BJ (cell line): ENCODE measurements at regions of chr21 and their contacts with region 1.

Region 1: DNA sequence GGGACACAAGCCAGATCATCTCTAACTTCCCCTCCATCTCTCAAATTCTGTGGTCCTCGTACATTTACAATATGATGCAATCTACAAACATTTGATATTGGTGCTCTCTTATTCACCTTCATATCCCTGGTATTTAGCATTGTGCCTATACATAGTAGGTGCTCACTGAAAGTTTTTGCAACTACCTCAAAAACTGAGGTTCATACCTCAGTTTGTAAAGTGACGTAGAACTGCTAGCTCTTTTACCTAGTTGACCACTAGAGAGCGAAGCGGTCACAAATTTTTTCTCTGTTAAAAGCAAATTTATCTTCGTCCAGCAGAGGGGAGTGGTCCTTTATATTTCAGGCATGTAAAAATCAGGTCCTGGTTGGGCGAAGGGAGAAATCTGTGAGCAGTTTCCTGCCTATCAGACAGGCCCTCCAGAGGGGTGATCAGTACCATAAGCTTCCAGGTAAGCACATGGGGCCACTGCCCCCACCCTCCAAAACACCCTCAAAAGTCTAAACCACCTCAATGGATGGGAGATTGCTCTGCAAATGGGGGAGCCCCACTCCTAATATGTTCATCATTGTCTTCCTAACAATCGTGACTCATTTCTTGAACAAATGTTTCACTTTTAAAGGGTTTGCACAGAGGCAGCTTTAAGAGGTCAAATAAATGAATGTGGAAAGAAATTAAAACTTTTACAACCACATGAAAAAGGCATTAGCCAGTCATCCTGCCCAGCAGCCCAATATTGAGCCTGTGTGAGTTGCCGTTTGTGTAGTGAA is 10.6 kb upstream of the HLCS start:
- DNase-seq: peak; percentile 46
- H3K4me3 ChIP-seq: no peak overlapping the region
- H3K27me3 ChIP-seq: no peaks in the 10 kb centered on the region
- CTCF ChIP-seq: peak; percentile 77

Region 2: GRCh38 chr21:36859744-36860501 is 117.1 kb before region 1 on chr21:
- CTCF ChIA-PET with region 1: no interaction called
- POLR2A ChIA-PET with region 1: no interaction called
- DNase-seq: no peak
- H3K4me3 ChIP-seq: no peak overlapping the region
- H3K27me3 ChIP-seq: no peaks in the 10 kb centered on the region
- CTCF ChIP-seq: no peak

Region 3: DNA sequence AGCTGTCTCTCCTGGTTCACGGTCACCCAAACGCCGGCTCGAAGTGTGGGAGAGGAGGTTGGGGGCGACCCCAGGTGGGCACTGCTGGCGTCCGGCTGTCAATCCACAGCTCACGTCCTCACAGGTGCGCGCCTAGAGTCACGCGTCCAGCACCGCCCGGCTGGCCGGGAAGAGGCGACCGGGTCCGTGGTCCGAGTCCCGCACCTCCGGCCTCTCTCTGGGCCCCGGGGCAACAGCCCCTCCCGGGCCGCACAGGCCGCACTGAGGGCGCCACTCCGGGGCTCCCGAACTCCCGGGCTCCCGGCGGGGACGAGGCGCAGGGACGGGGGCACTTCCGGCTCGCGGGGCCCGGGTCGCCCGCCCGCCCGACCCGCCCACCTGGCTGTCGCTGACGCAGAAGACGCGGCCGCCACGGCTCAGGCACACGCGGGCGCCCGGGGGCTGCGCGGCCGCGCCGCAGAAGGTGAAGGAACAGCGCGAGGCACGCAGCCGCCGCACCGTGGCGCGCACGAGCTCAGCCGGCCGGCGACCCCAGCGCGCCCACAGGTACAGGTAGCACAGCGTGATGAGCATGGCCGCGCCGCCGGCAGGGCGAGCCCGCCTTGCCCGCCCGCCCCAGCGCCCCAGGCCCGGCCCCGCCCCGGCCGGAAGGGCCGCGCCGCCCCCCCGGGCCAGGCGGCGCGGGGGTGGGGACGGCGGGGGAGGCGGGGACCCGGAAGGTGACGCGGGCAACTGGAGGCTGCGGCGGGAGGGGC is 10.8 kb before region 1 on chr21 and contains the start of gene HLCS:
- CTCF ChIA-PET with region 1: interaction called, 10 read pairs
- POLR2A ChIA-PET with region 1: no interaction called
- DNase-seq: no peak
- H3K4me3 ChIP-seq: peak within 1 kb of the TSS; percentile 82
- H3K27me3 ChIP-seq: no peaks in the 10 kb centered on the region
- CTCF ChIP-seq: no peak
- polyA plus RNA-seq, gene HLCS: 16.9 and 23.3 TPM in 2 replicates

Region 4: DNA sequence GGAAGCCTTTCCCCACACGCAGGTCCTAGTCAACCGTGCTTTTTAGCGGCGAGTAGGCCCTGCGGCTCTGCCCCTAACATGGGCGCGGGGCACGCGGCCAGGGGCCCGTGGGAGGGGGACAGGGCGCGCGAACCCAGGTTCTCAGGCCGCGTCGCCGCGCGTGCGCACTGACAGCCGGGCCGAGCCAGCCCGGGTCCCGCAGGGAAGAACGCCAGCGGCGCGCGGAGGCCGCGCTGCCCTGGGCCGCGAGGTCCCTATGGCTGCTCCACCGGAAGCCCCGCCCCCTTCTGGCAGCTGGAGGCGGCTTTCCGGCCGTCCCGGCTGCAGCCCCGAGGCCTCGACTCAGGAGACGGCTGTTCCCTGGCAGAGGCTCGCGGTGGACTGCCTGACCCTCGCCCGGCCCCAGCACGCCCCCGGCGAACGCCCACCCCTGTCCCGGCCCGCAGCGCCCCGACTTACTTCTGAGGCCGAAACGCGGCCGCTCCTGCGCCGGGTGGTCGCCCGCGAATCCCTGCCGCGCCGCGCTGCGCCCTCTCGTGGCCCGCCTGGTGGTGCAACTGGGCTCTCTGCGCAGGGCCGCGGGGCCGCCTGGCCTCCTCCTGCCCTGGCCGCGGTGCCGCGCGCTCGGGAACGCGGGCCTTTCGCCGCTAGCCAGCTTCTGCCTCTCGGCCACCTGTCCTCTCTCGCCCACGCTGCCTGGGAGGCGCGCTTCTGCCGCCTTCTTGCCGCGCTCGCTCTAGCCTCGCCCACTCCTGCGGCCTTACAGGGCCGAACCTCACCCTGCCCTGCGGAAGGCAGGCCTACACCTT is 12.8 kb after region 1 on chr21:
- CTCF ChIA-PET with region 1: interaction called, 29 read pairs
- POLR2A ChIA-PET with region 1: no interaction called
- DNase-seq: peak; percentile 37
- H3K4me3 ChIP-seq: peak overlapping the region; percentile 58
- H3K27me3 ChIP-seq: no peaks in the 10 kb centered on the region
- CTCF ChIP-seq: peak; percentile 37; the same call in 1 of the 2 replicates

Region 5: DNA sequence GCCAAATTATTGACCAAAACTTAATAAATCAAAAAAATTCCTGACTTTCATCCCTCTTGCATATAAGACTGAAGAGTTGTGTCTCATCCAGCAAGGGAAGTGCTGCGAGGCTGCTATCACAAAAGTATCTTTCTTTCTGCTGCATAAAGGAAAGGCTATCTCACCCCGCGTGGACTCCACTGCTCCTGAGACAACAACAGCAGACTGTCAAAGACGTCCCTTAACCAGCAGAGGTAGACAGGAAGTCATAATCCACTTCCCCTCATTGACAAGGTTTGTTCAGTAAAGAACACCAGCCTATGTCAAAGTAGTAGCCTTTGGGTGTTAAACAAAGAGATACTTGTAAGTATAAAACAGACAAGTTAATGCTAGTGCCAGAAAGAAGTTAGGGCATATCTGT is 260.7 kb after region 1 on chr21:
- CTCF ChIA-PET with region 1: no interaction called
- POLR2A ChIA-PET with region 1: no interaction called
- DNase-seq: no peak
- H3K4me3 ChIP-seq: no peak overlapping the region
- H3K27me3 ChIP-seq: no peaks in the 10 kb centered on the region
- CTCF ChIP-seq: no peak

Region 6: DNA sequence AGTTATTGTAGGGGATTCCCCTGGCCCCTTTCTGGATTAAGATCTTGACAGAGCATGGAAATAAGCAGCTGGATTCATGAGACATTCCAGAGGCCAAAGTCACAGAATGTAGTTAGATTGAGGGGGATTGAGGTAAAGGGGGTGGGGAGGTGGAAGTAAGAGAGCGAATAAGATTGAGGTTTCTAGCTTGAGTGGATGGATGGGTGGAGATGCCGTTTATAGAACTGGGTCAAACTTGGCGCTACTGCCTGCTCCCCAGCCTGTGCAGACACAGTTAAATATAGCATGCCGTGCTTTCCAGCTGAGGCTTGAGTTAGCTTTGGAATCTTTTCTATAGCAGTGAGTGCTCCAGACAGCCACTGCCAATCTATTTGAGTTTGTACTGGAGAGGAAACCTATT is 475.2 kb after region 1 on chr21:
- CTCF ChIA-PET with region 1: no interaction called
- POLR2A ChIA-PET with region 1: interaction called, 10 read pairs
- DNase-seq: peak; percentile 50
- H3K4me3 ChIP-seq: no peak overlapping the region
- H3K27me3 ChIP-seq: no peaks in the 10 kb centered on the region
- CTCF ChIP-seq: no peak